BJ (cell line): ENCODE measurements at regions of chr7 and their contacts with region 1.

Region 1: GRCh38 chr7:12610899-12611298 is 40.4 kb downstream of the SCIN start:
- DNase-seq: no peak
- H3K4me3 ChIP-seq: no peak overlapping the region
- H3K27me3 ChIP-seq: no peaks in the 10 kb centered on the region
- CTCF ChIP-seq: no peak

Region 2: DNA sequence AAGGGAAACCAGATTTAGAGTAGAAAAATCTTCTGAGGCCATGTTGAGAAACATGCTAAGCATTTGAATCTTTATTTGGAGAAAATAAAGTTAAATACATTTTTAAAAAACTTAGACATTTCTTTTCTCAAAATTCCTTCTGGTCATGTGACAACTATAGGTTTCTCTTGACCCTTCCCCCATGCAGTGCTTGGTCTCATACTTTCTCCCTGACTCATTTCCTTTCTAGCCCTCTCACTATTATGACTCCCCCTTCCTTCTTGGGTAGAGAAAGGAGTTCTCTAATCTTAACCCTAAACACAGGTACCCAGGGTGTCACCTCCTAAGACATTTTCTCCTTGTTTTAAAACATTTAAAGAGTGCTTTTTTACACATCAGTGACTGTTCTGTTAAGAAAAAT is 579.3 kb before region 1 on chr7:
- CTCF ChIA-PET with region 1: no interaction called
- POLR2A ChIA-PET with region 1: no interaction called
- DNase-seq: no peak
- H3K4me3 ChIP-seq: no peak overlapping the region
- H3K27me3 ChIP-seq: no peaks in the 10 kb centered on the region
- CTCF ChIP-seq: no peak

Region 3: DNA sequence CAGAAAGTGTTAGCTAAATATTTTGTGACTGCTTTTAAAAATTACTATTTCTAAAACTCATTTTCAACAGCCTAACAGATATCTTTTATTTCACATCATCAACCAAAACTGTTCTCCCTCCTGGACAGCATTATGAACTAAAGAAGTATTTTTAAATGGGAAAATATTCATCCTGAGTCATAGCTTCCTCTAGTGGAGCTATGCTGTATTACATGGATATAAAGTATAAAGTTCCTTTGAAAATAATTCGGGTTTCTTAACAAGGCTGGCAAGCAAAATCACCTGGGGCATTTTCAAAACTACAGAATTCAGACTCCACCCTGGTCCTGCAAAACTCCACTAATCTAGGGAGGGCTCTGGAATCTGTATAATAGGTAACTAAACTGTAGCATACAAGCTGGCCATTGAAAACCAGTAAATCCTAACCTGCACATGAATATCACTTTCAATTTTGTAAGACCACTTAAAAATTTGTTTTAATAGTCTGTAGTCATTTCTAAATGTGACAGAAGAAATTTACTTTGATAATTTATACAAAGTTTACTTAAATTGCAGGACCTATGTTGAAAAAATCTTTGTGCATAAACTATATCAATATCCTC is 13.1 kb after region 1 on chr7:
- CTCF ChIA-PET with region 1: interaction called, 12 read pairs
- POLR2A ChIA-PET with region 1: no interaction called
- DNase-seq: no peak
- H3K4me3 ChIP-seq: no peak overlapping the region
- H3K27me3 ChIP-seq: no peaks in the 10 kb centered on the region
- CTCF ChIP-seq: peak; percentile 75